Transverse colon (tissue), 4 donors: ENCODE measurements at regions of chr3 and their contacts with region 1.

Region 1: DNA sequence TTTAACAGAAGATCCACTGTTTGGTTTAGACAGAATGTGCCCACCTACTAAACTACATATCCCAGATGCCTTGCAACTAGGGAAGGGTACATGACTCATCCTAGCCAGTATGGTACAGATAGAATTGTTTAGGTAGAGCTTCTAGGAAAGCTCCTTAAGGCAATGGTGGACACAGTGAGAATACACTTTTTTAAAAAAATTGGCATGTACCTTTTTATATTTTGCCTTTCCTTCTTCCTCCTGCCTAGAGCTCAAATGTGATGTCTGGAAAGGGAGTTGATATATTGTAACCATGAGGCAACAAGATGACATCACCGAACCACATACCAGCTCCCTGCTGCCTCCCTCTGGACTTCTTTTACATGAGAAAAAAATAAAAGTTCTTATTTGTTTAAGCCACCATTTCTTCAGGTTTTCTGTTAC is 14.4 kb upstream of the C3orf80 start:
- DNase-seq: no peak
- H3K4me3 ChIP-seq: no peak overlapping the region
- H3K27ac ChIP-seq: no peak overlapping the region
- H3K4me1 ChIP-seq: no peaks in the 10 kb centered on the region
- H3K27me3 ChIP-seq: no peaks in the 10 kb centered on the region
- CTCF ChIP-seq: no peak
- EP300 ChIP-seq: no peak
- POLR2A ChIP-seq: no peak

Region 2: GRCh38 chr3:160260587-160261270 is 49.9 kb after region 1 on chr3:
- in situ Hi-C with region 1: no loop called
- intact Hi-C with region 1: loop called (anchors 2 kb)
- DNase-seq: no peak
- H3K4me3 ChIP-seq: no peak overlapping the region
- H3K27ac ChIP-seq: no peak overlapping the region
- H3K4me1 ChIP-seq: peaks cover 0 to 9% (median 2%) of the 10 kb centered on the region in 4 donors
- H3K27me3 ChIP-seq: no peaks in the 10 kb centered on the region
- CTCF ChIP-seq: no peak
- EP300 ChIP-seq: no peak
- POLR2A ChIP-seq: no peak